Keratinocyte (primary cell): ENCODE measurements at regions of chr5 and their contacts with region 1.

Region 1: DNA sequence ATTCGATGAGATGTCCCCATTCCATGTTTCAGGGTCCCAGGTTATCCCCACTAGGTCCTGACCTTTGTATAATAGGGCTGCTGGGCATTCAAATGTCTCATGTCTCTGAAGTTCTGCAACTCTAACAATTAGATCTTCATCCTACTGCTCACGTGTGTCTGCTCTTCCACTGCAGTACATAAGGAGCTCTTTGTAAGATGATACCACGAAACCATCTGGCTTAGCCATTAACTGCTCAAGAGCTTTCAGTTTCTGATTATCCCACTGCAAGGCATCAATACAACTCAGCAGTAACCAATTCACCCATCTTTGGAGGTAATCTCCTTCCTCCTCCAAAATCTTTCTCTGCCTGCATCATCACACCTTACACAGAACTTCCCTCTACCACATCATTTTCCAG is 49.9 kb upstream of the PPP2CA start:
- DNase-seq: no peak
- H3K4me3 ChIP-seq: no peak overlapping the region
- H3K27ac ChIP-seq: no peak overlapping the region
- H3K4me1 ChIP-seq: peaks cover 7% of the 10 kb centered on the region
- H3K27me3 ChIP-seq: no peaks in the 10 kb centered on the region
- CTCF ChIP-seq: no peak

Region 2: DNA sequence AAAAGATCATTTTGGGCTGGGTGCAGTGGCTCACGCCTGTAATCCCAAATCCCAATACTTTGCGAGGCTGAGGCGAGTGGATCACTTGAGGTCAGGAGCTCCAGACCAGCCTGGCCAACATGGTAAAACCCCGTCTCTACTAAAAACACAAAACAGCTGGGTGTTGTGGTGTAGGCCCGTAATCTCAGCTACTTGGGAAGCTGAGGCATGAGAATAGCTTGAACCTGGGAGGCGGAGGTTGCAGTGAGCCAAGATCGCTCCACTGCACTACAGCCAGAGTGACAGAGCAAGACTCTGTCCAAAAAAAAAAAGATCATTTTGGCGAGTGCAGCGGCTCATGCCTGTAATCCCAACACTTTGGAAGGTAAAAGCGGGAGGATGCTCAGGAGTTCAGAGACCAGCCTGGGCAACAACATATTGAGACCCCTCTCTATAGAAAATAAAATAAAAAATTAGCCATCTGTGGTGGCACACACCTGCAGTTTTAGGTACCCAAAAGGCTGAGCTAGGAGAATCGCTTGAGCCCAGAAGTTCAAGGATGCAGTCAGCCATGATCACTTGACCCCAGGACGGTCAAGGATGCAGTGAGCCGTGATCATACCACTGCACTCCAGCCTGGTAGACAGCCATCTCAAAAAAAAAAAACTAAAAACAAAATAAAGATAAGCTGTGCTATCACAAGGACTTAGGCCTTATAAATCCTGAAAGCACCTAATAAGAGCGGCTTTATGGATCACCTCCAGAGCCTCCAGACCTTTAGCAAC is 66.2 kb before region 1 on chr5:
- dilution Hi-C with region 1: loop called (anchors 5 kb)
- DNase-seq: no peak
- H3K4me3 ChIP-seq: no peak overlapping the region
- H3K27ac ChIP-seq: no peak overlapping the region
- H3K4me1 ChIP-seq: no peaks in the 10 kb centered on the region
- H3K27me3 ChIP-seq: no peaks in the 10 kb centered on the region
- CTCF ChIP-seq: no peak